ENCODE measurements at regions of chr13 and their contacts with region 1.

Region 1: DNA sequence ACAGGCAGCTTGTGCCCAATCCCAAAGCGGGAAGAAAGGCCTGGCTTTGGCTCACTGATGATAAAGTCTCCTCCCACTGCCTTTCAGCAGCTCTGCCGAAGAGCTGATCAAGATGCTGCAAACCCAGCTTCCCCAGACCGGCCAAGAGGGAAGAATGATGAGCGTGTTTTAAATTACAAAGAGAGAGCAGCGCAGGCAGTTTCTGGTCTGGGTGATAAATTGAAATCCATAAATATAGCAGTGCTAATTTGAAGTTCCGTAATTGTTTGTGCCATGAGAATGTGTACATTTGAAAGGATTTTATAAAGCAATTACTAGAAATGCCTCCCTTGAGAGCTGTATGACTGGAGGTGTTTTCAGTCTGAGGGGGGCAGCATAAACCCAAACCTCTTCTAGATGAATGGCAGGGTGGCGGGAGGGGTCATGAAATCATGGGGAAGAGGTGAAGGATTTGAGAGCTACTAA is 171.8 kb downstream of the STK24 start:
- DNase-seq: no peak
- H3K4me3 ChIP-seq: no peak overlapping the region
- H3K27ac ChIP-seq: no peak overlapping the region
- H3K27me3 ChIP-seq: no peaks in the 10 kb centered on the region
- CTCF ChIP-seq: peak; percentile 15

Region 2: GRCh38 chr13:97879646-97880310 is 525.4 kb before region 1 on chr13:
- in situ Hi-C with region 1: loop called (anchors 25 kb)
- DNase-seq: peak; percentile 82
- H3K4me3 ChIP-seq: no peak overlapping the region
- H3K27ac ChIP-seq: peak overlapping the region; percentile 81
- H3K27me3 ChIP-seq: no peaks in the 10 kb centered on the region
- CTCF ChIP-seq: no peak

Region 3: GRCh38 chr13:98142380-98143156 is 262.6 kb before region 1 on chr13 and contains the start of gene FARP1:
- in situ Hi-C with region 1: loop called (anchors 25 kb)
- DNase-seq: no peak
- H3K4me3 ChIP-seq: peak within 1 kb of the TSS; percentile 66
- H3K27ac ChIP-seq: peak within 1 kb of the TSS; percentile 27
- H3K27me3 ChIP-seq: no peaks in the 10 kb centered on the region
- CTCF ChIP-seq: peak; percentile 23

Measured in brain microvascular endothelial cell (primary cell).